Mammary epithelial cell (primary cell): ENCODE measurements at regions of chr17 and their contacts with region 1.

Region 1: GRCh38 chr17:57747221-57748017 is 2.3 kb upstream of the CCDC182 start:
- DNase-seq: peak; percentile 40
- H3K4me3 ChIP-seq: no peak overlapping the region
- H3K27ac ChIP-seq: no peak overlapping the region
- H3K4me1 ChIP-seq: no peaks in the 10 kb centered on the region
- H3K27me3 ChIP-seq: no peaks in the 10 kb centered on the region
- CTCF ChIP-seq: peak; percentile 75 to 84

Region 2: DNA sequence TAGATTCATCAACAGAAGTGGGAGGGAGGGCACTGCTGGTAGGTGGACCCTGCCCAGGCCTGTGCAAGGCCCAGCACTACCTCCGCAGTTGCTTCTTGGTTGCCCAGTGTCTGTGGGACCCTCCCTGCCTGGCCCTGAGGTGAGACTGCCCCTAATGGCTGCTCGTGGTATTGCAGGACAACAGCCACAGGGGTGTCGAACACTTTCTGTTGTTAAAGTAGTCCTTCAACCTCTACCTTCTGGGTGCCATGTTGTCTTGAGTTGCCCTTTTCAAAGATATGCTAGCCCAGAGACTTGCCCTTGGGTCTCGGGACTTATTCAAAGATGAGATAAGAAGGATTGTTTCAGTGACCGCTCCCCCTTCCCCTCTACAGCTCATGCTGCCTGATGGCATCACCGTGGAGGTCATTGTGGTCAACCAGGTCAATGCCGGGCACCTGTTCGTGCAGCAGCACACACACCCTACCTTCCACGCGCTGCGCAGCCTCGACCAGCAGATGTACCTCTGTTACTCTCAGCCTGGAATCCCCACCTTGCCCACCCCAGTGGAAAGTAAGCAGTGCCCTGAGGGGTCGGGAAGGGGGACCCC is 633.2 kb before region 1 on chr17:
- CTCF ChIA-PET with region 1: no interaction called
- dilution Hi-C with region 1: loop called (anchors 25 kb)
- in situ Hi-C with region 1: no loop called
- intact Hi-C with region 1: no loop called
- DNase-seq: no peak
- H3K4me3 ChIP-seq: no peak overlapping the region
- H3K27ac ChIP-seq: no peak overlapping the region
- H3K4me1 ChIP-seq: peaks cover 15% of the 10 kb centered on the region
- H3K27me3 ChIP-seq: no peaks in the 10 kb centered on the region
- CTCF ChIP-seq: peak; percentile 76 to 90

Region 3: DNA sequence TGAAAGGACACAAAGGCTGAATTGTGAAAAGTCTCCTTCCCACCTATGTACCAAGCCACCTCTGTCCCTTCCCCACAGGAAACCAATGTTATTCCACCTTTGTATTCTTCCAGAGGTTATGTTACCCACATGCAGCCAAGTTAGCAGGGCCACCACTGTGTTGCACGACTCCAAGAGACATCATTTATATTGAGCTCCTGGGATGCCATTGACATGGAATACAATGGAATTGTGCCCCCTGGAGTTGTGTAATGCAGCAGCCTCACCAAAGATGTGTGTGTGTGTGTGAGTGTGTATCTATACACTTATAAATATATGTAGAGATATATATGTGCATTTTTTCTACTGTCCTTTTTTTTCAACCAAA is 512.7 kb before region 1 on chr17:
- CTCF ChIA-PET with region 1: interaction called, 4 read pairs
- dilution Hi-C with region 1: no loop called
- in situ Hi-C with region 1: loop called in 1 of 2 experiments (anchors 10 kb)
- intact Hi-C with region 1: no loop called
- DNase-seq: no peak
- H3K4me3 ChIP-seq: no peak overlapping the region
- H3K27ac ChIP-seq: no peak overlapping the region
- H3K4me1 ChIP-seq: peaks cover 14% of the 10 kb centered on the region
- H3K27me3 ChIP-seq: no peaks in the 10 kb centered on the region
- CTCF ChIP-seq: peak in 1 of 2 donors; percentile 8

Region 4: GRCh38 chr17:57597531-57598453 is 149.6 kb before region 1 on chr17:
- CTCF ChIA-PET with region 1: no interaction called
- dilution Hi-C with region 1: no loop called
- in situ Hi-C with region 1: loop called in 1 of 2 experiments (anchors 25 kb)
- intact Hi-C with region 1: loop called (anchors 1 kb)
- DNase-seq: peak; percentile 49
- H3K4me3 ChIP-seq: no peak overlapping the region
- H3K27ac ChIP-seq: no peak overlapping the region
- H3K4me1 ChIP-seq: peaks cover 2% of the 10 kb centered on the region
- H3K27me3 ChIP-seq: no peaks in the 10 kb centered on the region
- CTCF ChIP-seq: peak; percentile 83 to 85

Region 5: DNA sequence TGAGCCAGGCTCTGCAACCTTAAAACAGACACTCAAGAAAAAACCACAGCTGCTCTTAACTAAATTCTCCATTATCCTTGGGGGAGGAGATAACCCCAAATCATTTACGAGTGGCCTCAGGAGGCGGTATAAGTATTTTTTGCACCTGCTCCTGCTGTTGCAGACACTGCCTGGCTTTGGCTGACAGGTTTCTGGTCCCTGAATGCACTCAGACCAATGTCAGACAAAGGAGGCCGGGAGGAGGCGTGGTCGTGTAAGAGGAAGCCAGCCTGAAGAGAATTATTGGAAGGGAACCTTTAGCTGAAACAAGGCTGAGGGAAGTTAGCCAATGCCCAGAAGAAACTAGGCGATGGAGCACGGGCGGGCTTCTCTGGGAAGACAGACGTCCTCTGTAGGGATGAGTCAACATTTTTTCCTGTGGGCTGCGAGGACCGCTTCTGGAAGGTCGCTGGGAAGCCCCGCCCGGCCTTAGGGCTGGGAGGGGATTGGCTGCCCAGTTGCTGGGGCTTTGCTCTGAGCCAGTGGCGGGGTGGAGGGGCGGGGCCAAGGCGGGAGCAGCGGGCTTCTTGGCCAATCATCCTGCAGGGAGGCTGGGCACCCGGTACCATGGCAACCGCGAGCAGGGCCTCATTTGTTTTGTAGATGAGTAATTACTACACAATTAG is 84.6 kb before region 1 on chr17:
- CTCF ChIA-PET with region 1: no interaction called
- dilution Hi-C with region 1: no loop called
- in situ Hi-C with region 1: no loop called
- intact Hi-C with region 1: no loop called
- DNase-seq: peak; percentile 99
- H3K4me3 ChIP-seq: peak overlapping the region in 1 of 3 experiments; percentile 13
- H3K27ac ChIP-seq: peak overlapping the region; percentile 50
- H3K4me1 ChIP-seq: peaks cover 19% of the 10 kb centered on the region
- H3K27me3 ChIP-seq: no peaks in the 10 kb centered on the region
- CTCF ChIP-seq: no peak

Region 6: GRCh38 chr17:57833179-57833939 is 85.9 kb after region 1 on chr17:
- CTCF ChIA-PET with region 1: interaction called, 3 read pairs
- dilution Hi-C with region 1: no loop called
- in situ Hi-C with region 1: no loop called
- intact Hi-C with region 1: loop called (anchors 1 kb)
- DNase-seq: peak; percentile 41
- H3K4me3 ChIP-seq: peak overlapping the region in 1 of 3 experiments; percentile 25
- H3K27ac ChIP-seq: no peak overlapping the region
- H3K4me1 ChIP-seq: peaks cover 4% of the 10 kb centered on the region
- H3K27me3 ChIP-seq: no peaks in the 10 kb centered on the region
- CTCF ChIP-seq: peak; percentile 90 to 97

Region 7: DNA sequence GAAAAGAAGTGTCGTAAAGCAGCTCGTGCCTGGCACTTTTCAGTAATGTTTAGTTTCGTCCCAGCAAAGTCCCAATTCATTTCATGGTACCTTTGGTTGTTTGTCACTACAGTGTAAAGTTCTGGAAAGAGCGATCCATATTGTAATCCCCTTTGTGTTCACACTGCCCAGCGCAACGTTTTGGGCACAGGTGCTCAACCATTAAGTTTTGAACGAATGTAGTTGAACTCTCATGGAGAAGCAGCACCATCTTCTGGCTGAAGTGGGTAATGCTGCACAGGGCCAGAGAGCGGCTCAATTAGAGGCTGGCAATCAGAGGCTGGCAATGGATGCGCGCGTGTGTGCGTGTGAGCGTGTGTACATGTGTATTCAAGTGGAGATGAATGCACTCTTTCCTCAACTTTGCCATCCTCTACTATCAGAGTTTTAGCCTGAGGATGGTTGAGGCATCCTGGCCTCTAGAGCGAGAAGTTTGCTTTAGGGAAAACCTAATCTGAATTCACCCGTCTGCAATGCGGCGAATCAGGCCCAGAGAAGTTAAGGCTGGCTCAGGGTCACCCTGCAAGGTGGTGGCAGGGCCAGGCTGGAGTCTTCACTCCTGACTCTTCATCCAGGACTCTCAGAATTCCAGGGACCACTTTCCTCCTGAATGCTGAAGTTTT is 365.7 kb after region 1 on chr17:
- CTCF ChIA-PET with region 1: no interaction called
- dilution Hi-C with region 1: no loop called
- in situ Hi-C with region 1: no loop called
- intact Hi-C with region 1: loop called (anchors 10 kb)
- DNase-seq: peak; percentile 55
- H3K4me3 ChIP-seq: no peak overlapping the region
- H3K27ac ChIP-seq: no peak overlapping the region
- H3K4me1 ChIP-seq: no peaks in the 10 kb centered on the region
- H3K27me3 ChIP-seq: no peaks in the 10 kb centered on the region
- CTCF ChIP-seq: peak; percentile 95 to 98